ENCODE measurements at regions of chr1 and their contacts with region 1.

Region 1: DNA sequence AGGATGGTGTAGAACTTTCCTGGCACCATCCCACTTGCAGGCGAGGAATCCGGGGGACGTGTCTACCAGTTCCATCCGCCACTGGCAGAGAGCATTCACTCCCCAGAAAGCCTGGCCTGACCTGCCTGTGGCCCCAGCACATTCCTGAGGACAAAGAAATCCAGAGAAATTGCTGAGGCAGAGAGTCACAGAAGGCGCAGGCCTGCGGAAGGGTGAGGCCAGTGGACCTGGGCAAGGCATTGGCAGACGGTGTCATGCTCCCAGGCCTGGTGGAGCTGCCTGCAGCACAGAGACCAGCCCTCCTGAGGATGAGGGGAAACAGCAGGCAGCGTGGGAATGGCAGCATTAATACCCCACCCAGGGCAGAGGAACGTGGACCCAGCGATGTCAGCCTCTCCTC is 81.2 kb upstream of the F3 start:
- DNase-seq: peak; percentile 87
- H3K4me3 Mint-ChIP-seq: peak overlapping the region; percentile 55
- H3K27ac Mint-ChIP-seq: peak overlapping the region; percentile 99
- H3K4me1 Mint-ChIP-seq: peaks cover 63% of the 10 kb centered on the region
- H3K27me3 Mint-ChIP-seq: no peaks in the 10 kb centered on the region
- CTCF ChIP-seq: no peak

Region 2: GRCh38 chr1:93865253-93865652 is 757.5 kb before region 1 on chr1:
- CTCF ChIA-PET with region 1: no interaction called
- intact Hi-C with region 1: no loop called
- DNase-seq: no peak
- H3K4me3 Mint-ChIP-seq: no peak overlapping the region
- H3K27ac Mint-ChIP-seq: no peak overlapping the region
- H3K4me1 Mint-ChIP-seq: no peaks in the 10 kb centered on the region
- H3K27me3 Mint-ChIP-seq: no peaks in the 10 kb centered on the region
- CTCF ChIP-seq: no peak

Region 3: DNA sequence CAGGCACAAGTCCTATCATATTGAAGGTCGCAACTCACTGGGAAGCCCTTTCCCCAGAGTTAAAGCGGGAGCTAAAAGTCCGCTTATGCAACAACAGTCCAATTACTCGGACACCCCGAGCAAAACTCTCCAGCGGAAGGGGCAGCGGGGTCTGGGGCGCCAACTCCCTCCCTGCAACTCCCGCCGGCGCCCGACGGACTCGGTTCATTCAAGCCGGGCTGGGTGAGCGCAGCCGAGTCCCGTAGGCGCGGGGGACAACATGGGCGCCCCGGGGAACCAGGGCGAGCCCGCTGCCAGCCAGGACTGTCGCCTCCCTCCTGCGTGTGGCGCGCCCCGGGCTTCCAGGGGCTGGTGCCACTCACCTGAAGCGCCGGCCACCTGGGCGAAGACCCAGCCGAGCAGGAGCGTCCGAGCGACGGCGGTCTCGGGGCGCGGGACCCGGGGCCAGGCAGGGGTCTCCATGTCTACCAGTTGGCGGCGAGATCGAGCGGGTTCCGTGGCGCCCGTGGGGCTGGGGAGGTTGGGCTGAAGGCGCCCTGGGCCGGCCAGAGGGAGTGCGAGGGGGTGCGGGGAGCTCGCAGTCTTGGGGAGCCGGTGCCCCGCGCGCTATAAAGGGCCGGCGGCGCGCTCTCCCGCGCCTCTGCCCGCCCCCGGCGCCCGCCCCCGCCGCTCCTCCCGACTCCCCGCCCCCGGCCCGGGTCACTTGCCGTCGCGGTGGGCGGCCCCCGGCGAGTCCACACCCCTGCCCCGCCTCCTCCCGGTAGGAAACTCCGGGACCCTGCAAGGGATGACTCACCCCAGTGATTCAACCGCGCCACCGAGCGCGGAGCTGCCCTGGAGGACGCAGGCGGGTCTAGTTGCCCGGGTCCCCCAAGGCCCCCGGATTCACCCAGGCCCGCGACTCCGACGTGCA is 81.3 kb before region 1 on chr1 and contains the start of gene F3:
- CTCF ChIA-PET with region 1: interaction called, 5 read pairs
- intact Hi-C with region 1: loop called (anchors 5 kb)
- DNase-seq: peak; percentile 98
- H3K4me3 Mint-ChIP-seq: peak within 1 kb of the TSS; percentile 75
- H3K27ac Mint-ChIP-seq: peak within 1 kb of the TSS; percentile 60
- H3K4me1 Mint-ChIP-seq: peaks cover 32% of the 10 kb centered on the region
- H3K27me3 Mint-ChIP-seq: no peaks in the 10 kb centered on the region
- CTCF ChIP-seq: no peak
- total RNA-seq, gene F3: 344 and 387 TPM in 2 replicates

Region 4: DNA sequence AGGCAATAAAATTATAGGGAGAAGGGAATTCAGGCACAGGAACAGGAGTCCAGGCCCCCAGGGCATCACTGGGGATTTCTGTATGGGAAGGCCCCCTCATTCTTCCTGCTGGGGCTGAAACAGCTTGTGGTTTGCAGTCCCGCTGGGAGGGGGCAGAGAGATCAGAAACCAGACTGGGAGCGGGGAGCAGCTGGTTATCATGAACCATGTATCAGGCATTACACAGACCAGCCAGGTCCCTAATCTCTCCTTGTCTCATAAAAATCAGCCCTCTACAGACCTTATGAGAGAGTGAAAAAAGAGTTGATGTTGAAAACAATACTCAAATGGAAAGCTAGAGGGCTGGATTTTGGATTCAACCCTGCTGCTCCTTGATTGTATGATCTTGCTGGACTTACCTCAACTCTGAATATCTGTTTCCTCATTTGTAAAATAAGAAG is 12.2 kb after region 1 on chr1:
- CTCF ChIA-PET with region 1: interaction called, 11 read pairs
- intact Hi-C with region 1: no loop called
- DNase-seq: no peak
- H3K4me3 Mint-ChIP-seq: no peak overlapping the region
- H3K27ac Mint-ChIP-seq: no peak overlapping the region
- H3K4me1 Mint-ChIP-seq: peaks cover 6% of the 10 kb centered on the region
- H3K27me3 Mint-ChIP-seq: no peaks in the 10 kb centered on the region
- CTCF ChIP-seq: no peak

Region 5: GRCh38 chr1:94641990-94642389 is 19.2 kb after region 1 on chr1:
- CTCF ChIA-PET with region 1: interaction called, 3 read pairs
- intact Hi-C with region 1: loop called (anchors 1 kb)
- DNase-seq: peak; percentile 75
- H3K4me3 Mint-ChIP-seq: no peak overlapping the region
- H3K27ac Mint-ChIP-seq: no peak overlapping the region
- H3K4me1 Mint-ChIP-seq: peaks cover 31% of the 10 kb centered on the region
- H3K27me3 Mint-ChIP-seq: no peaks in the 10 kb centered on the region
- CTCF ChIP-seq: no peak

Region 6: DNA sequence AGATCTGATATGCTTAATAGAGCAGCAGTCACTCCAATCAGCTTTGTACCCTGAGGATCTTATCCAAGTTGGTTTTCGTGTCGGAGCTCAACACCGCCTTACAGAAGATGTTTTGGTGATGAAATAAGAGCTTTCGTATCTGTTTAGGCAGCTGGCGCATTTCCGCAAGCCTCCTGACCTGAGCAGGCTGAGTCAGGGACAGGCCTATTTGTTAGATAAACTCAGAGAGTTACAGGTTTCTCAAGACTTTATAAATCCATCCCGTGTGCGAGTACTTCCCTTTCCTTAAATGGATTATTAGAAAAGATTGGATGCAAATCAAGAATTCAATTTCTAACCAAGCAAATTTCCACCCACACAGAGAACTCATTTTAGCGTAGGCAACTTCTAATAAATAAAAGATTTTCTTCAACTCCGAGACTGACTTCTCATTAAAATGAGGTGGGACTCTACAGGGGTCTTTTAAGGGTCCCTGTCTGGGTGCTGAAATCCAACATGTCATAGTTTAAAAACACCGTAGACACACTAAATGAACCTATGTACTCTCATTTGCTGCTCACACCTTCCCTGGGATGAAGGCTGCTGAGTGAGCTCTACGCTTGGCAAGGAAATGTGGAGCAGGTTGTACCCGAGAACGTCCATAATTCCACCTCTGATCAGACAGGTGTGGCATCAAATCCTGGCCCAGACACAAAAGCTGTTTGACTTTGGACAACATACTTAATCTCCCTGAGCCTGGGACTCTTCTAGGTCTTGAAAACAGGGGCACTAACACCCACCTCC is 25.7 kb after region 1 on chr1:
- CTCF ChIA-PET with region 1: interaction called, 4 read pairs
- intact Hi-C with region 1: loop called (anchors 2 kb)
- DNase-seq: peak; percentile 75
- H3K4me3 Mint-ChIP-seq: peak overlapping the region; percentile 7
- H3K27ac Mint-ChIP-seq: no peak overlapping the region
- H3K4me1 Mint-ChIP-seq: peaks cover 28% of the 10 kb centered on the region
- H3K27me3 Mint-ChIP-seq: no peaks in the 10 kb centered on the region
- CTCF ChIP-seq: no peak